Transverse colon (tissue), 4 donors: ENCODE measurements at regions of chr3 and their contacts with region 1.

Region 1: GRCh38 chr3:34837848-34838741 is 801.2 kb upstream of the ARPP21 start:
- DNase-seq: no peak
- H3K4me3 ChIP-seq: no peak overlapping the region
- H3K27ac ChIP-seq: no peak overlapping the region
- H3K4me1 ChIP-seq: no peaks in the 10 kb centered on the region
- H3K27me3 ChIP-seq: no peaks in the 10 kb centered on the region
- CTCF ChIP-seq: no peak
- EP300 ChIP-seq: no peak
- POLR2A ChIP-seq: no peak

Region 2: DNA sequence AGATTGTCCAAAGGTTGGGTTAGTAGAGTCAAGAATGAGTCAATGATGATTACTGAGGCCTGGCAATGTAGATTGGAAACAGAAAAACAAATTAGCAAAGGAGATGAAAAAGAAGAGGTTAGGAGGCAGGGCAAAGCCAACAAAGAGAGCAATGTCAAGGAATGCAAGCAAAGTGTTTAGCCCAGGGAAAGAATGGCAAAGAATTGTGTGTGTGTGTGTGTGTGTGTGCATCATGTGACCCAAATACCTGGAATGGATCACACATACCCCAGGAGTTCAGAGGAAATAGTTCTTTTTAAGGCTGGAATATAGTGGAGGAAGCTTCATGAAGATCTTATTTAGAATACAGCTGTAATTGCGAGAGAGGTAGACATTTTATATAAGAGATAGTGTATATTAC is 30.5 kb before region 1 on chr3:
- in situ Hi-C with region 1: no loop called
- intact Hi-C with region 1: no loop called
- DNase-seq: no peak
- H3K4me3 ChIP-seq: no peak overlapping the region
- H3K27ac ChIP-seq: no peak overlapping the region
- H3K4me1 ChIP-seq: no peaks in the 10 kb centered on the region
- H3K27me3 ChIP-seq: no peaks in the 10 kb centered on the region
- CTCF ChIP-seq: no peak
- EP300 ChIP-seq: no peak
- POLR2A ChIP-seq: no peak

Region 3: DNA sequence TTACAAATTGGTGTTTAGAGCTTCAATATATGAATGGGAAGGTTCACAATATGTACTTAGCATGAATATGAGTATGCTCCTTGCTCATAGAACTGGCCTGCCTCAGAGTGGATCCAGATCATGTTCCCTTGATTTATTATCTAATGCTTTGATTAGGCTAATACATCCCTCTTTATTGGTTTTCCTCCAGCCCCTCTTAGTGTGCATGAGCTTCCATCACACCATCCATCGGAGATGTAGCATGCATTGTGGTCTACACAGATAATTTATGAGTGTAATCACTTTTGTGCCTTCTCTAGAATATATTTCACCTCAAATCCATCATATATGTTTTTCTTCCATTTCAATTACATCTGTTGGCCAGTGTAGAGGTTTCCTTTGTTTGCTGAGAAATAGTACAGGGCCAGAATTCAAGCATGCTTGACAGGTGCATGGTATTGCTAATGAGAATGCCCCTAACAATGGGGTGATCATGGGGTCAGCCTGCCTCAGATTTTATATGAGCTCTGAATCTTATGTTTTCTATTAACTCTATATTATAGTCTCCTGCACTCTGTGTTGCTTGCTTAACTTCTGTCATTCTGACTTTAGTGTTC is 14.8 kb after region 1 on chr3:
- in situ Hi-C with region 1: no loop called
- intact Hi-C with region 1: loop called (anchors 2 kb)
- DNase-seq: no peak
- H3K4me3 ChIP-seq: no peak overlapping the region
- H3K27ac ChIP-seq: no peak overlapping the region
- H3K4me1 ChIP-seq: no peaks in the 10 kb centered on the region
- H3K27me3 ChIP-seq: no peaks in the 10 kb centered on the region
- CTCF ChIP-seq: no peak
- EP300 ChIP-seq: no peak
- POLR2A ChIP-seq: no peak

Region 4: GRCh38 chr3:35245001-35245400 is 406.9 kb after region 1 on chr3:
- in situ Hi-C with region 1: no loop called
- intact Hi-C with region 1: loop called (anchors 10 kb)
- DNase-seq: no peak
- H3K4me3 ChIP-seq: no peak overlapping the region
- H3K27ac ChIP-seq: no peak overlapping the region
- H3K4me1 ChIP-seq: no peaks in the 10 kb centered on the region
- H3K27me3 ChIP-seq: no peaks in the 10 kb centered on the region
- CTCF ChIP-seq: no peak
- EP300 ChIP-seq: no peak
- POLR2A ChIP-seq: no peak